ENCODE measurements at regions of chr6 and their contacts with region 1.

Region 1: DNA sequence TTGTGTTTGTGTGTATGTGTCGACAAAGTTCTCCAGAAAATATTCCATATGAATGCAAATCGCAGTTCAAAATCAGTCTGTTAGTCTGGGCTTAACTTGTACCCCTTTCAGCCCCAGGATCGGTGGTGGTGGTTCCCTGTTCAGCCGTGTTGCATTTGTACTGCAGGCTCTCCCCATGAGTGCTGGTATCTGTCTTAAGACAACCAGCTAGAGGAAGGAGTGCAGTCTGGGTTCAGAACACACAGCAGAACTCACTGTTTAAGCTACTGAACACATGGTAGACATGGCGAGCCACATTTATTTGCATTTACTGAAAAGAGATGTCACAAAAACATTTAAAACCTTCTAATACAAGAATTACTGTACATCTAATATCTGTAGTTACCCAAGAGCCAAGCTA is 192.1 kb downstream of the ARID1B start:
- DNase-seq: no peak
- ATAC-seq: no peak
- H3K4me3 ChIP-seq: no peak overlapping the region
- H3K4me3 Mint-ChIP-seq: peak overlapping the region in 4 of 10 donors; percentile 0 to 9 (median 6)
- H3K27ac ChIP-seq: no peak overlapping the region
- H3K27ac Mint-ChIP-seq: peak overlapping the region in 3 of 9 donors; percentile 31 to 59 (median 36)
- H3K4me1 ChIP-seq: peaks cover 0 to 4% of the 10 kb centered on the region in 2 donors
- H3K4me1 Mint-ChIP-seq: peaks cover 5 to 88% (median 75%) of the 10 kb centered on the region in 7 donors
- H3K27me3 ChIP-seq: no peaks in the 10 kb centered on the region
- H3K27me3 Mint-ChIP-seq: no peaks in the 10 kb centered on the region

Region 2: GRCh38 chr6:156662025-156662445 is 307.2 kb before region 1 on chr6:
- CTCF ChIA-PET with region 1: no interaction called
- POLR2A ChIA-PET with region 1: no interaction called
- intact Hi-C with region 1: no loop called
- DNase-seq: peak in 1 of 9 donors; percentile 65
- ATAC-seq: no peak
- H3K4me3 ChIP-seq: no peak overlapping the region
- H3K4me3 Mint-ChIP-seq: peak overlapping the region in 1 of 10 donors; percentile 36
- H3K27ac ChIP-seq: no peak overlapping the region
- H3K27ac Mint-ChIP-seq: no peak overlapping the region
- H3K4me1 ChIP-seq: no peaks in the 10 kb centered on the region
- H3K4me1 Mint-ChIP-seq: peaks cover 0 to 13% (median 7%) of the 10 kb centered on the region in 7 donors
- H3K27me3 ChIP-seq: no peaks in the 10 kb centered on the region
- H3K27me3 Mint-ChIP-seq: peaks cover 0 to 16% (median 9%) of the 10 kb centered on the region in 5 donors

Region 3: GRCh38 chr6:156982168-156982567 is 12.9 kb after region 1 on chr6:
- CTCF ChIA-PET with region 1: no interaction called
- POLR2A ChIA-PET with region 1: no interaction called
- intact Hi-C with region 1: loop called in 1 of 2 experiments (anchors 2 kb)
- DNase-seq: peak in 2 of 9 donors; percentile 19 to 21
- ATAC-seq: peak; percentile 27
- H3K4me3 ChIP-seq: no peak overlapping the region
- H3K4me3 Mint-ChIP-seq: peak overlapping the region in 4 of 10 donors; percentile 6 to 36 (median 14)
- H3K27ac ChIP-seq: no peak overlapping the region
- H3K27ac Mint-ChIP-seq: peak overlapping the region in 3 of 9 donors; percentile 28 to 43 (median 36)
- H3K4me1 ChIP-seq: peaks cover 0 to 37% of the 10 kb centered on the region in 2 donors
- H3K4me1 Mint-ChIP-seq: peaks cover 59 to 98% (median 94%) of the 10 kb centered on the region in 7 donors
- H3K27me3 ChIP-seq: no peaks in the 10 kb centered on the region
- H3K27me3 Mint-ChIP-seq: no peaks in the 10 kb centered on the region